Ovary (tissue), 10 donors: ENCODE measurements at regions of chr12 and their contacts with region 1.

Region 1: GRCh38 chr12:25904442-25904841 is 54.0 kb upstream of the RASSF8 start:
- DNase-seq: no peak
- H3K4me3 ChIP-seq: no peak overlapping the region
- H3K27ac ChIP-seq: no peak overlapping the region
- H3K4me1 ChIP-seq: no peaks in the 10 kb centered on the region
- H3K27me3 ChIP-seq: no peaks in the 10 kb centered on the region
- CTCF ChIP-seq: no peak
- EP300 ChIP-seq: no peak
- POLR2A ChIP-seq: no peak

Region 2: GRCh38 chr12:26077915-26078702 is 173.7 kb after region 1 on chr12:
- intact Hi-C with region 1: loop called in 1 of 4 experiments (anchors 10 kb)
- DNase-seq: no peak
- H3K4me3 ChIP-seq: no peak overlapping the region
- H3K27ac ChIP-seq: no peak overlapping the region
- H3K4me1 ChIP-seq: no peaks in the 10 kb centered on the region
- H3K27me3 ChIP-seq: no peaks in the 10 kb centered on the region
- CTCF ChIP-seq: no peak
- EP300 ChIP-seq: no peak
- POLR2A ChIP-seq: no peak

Region 3: GRCh38 chr12:27852742-27853141 is 1948.3 kb after region 1 on chr12:
- intact Hi-C with region 1: loop called in 1 of 4 experiments (anchors 5 kb)
- DNase-seq: no peak
- H3K4me3 ChIP-seq: no peak overlapping the region
- H3K27ac ChIP-seq: no peak overlapping the region
- H3K4me1 ChIP-seq: no peaks in the 10 kb centered on the region
- H3K27me3 ChIP-seq: no peaks in the 10 kb centered on the region
- CTCF ChIP-seq: no peak
- EP300 ChIP-seq: no peak
- POLR2A ChIP-seq: no peak